Aorta (tissue), 5 donors: ENCODE measurements at regions of chr13 and their contacts with region 1.

Region 1: GRCh38 chr13:111210544-111211469 is 95.7 kb downstream of the ARHGEF7 start:
- DNase-seq: peak; percentile 71 to 80
- ATAC-seq: peak; percentile 76
- H3K4me3 ChIP-seq: no peak overlapping the region
- H3K27ac ChIP-seq: peak overlapping the region in 1 of 2 donors; percentile 67
- H3K4me1 ChIP-seq: peaks cover 2 to 4% of the 10 kb centered on the region in 2 donors
- H3K27me3 ChIP-seq: no peaks in the 10 kb centered on the region

Region 2: GRCh38 chr13:110593430-110594130 is 617.2 kb before region 1 on chr13:
- intact Hi-C with region 1: no loop called
- DNase-seq: no peak
- ATAC-seq: peak; percentile 86
- H3K4me3 ChIP-seq: no peak overlapping the region
- H3K27ac ChIP-seq: no peak overlapping the region
- H3K4me1 ChIP-seq: no peaks in the 10 kb centered on the region
- H3K27me3 ChIP-seq: no peaks in the 10 kb centered on the region

Region 3: GRCh38 chr13:110980921-110981320 is 229.9 kb before region 1 on chr13:
- intact Hi-C with region 1: no loop called
- DNase-seq: no peak
- ATAC-seq: no peak
- H3K4me3 ChIP-seq: no peak overlapping the region
- H3K27ac ChIP-seq: no peak overlapping the region
- H3K4me1 ChIP-seq: no peaks in the 10 kb centered on the region
- H3K27me3 ChIP-seq: no peaks in the 10 kb centered on the region

Region 4: DNA sequence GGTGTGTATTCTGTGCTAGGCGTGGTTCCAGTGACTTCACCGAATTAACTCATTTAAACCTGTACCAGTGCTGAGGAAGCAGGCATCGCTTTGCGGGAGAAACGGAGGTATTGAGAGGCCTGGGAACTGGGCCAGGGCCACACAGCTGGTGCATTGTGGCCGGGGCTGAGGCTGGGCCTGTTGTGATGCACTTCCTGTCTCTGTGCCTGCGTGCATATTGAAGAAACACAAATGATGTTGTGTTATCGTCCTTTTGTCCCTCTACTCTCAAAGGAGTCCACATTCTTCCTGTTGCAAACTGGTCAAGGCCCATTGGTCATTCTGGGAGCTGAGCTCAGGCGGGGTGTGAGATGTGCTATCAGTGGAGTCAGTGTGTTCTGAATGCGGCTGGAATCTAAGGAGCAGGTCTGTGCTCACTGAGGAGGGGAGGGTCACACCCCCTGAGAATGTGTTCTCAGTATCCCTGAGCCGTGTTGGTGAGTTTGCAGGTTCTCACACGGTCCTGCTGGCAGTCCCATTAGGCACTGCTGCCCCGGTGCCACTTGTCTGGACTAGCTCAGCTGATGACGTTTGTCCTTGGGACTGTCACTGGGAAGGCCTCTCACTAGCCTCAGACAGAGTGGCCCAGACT is 33.6 kb before region 1 on chr13:
- intact Hi-C with region 1: loop called in 1 of 2 experiments (anchors 5 kb)
- DNase-seq: peak in 1 of 2 donors; percentile 75
- ATAC-seq: peak; percentile 65
- H3K4me3 ChIP-seq: no peak overlapping the region
- H3K27ac ChIP-seq: peak overlapping the region; percentile 99 to 100
- H3K4me1 ChIP-seq: peaks cover 9 to 13% of the 10 kb centered on the region in 2 donors
- H3K27me3 ChIP-seq: no peaks in the 10 kb centered on the region

Region 5: GRCh38 chr13:111184458-111185401 is 26.1 kb before region 1 on chr13:
- intact Hi-C with region 1: loop called (anchors 2 to 5 kb)
- DNase-seq: peak in 1 of 2 donors; percentile 63
- ATAC-seq: peak; percentile 77
- H3K4me3 ChIP-seq: no peak overlapping the region
- H3K27ac ChIP-seq: peak overlapping the region; percentile 87 to 88
- H3K4me1 ChIP-seq: peaks cover 3 to 5% of the 10 kb centered on the region in 2 donors
- H3K27me3 ChIP-seq: no peaks in the 10 kb centered on the region

Region 6: DNA sequence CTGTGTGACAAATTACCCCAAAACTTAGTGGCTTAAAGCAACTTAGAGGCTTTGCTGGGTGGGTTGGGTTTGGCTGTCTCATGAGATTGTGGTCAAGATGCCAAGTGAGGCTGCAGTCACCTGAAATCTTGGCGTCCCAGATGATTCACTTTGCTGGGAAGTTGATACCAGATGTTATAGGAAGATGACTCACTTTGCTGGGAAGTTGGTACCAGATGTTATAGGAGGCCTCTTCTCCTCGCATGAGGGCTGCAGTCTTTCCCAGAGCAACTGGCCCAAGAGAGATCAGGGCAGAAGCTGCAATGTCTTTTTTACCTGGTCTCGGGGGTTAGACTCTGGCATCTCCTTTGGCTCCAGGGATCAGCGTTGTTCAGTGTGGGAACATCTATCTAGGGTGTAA is 126.4 kb after region 1 on chr13:
- intact Hi-C with region 1: no loop called
- DNase-seq: no peak
- ATAC-seq: no peak
- H3K4me3 ChIP-seq: no peak overlapping the region
- H3K27ac ChIP-seq: no peak overlapping the region
- H3K4me1 ChIP-seq: no peaks in the 10 kb centered on the region
- H3K27me3 ChIP-seq: no peaks in the 10 kb centered on the region

Region 7: DNA sequence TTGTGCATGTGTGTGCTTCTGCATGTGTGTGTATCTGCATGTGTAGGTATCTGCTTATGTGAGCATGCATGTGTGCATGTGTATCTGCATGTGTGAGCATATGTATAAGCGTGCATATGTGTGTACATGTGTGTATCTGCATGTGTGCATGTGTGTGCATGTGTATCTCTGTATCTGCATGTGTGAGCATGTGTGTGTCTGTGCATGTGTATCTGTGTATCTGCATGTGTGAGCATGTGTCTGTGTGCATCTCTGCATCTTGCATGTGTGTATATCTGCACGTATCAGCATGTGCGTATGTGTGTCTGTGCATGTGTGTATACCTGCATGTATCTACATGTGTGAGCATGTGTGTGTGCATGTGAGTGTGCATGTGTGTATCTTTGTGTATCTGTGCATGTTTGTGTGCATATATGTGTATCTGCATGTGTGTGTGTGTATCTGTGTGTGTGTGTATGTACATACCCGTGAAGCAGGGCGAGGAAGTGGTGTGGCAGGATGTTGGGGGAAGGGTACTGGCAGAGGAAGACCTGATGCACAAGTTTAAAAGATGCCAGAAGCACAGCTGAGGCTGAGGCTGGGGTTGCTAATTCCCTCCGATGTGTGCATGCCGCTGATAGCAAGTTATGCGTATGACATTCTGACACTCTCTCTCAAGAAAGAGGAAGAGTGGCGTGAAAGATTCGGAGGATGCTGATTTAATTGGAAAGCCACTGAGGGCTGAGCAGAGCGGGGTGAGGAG is 173.8 kb after region 1 on chr13:
- intact Hi-C with region 1: no loop called
- DNase-seq: no peak
- ATAC-seq: no peak
- H3K4me3 ChIP-seq: no peak overlapping the region
- H3K27ac ChIP-seq: no peak overlapping the region
- H3K4me1 ChIP-seq: no peaks in the 10 kb centered on the region
- H3K27me3 ChIP-seq: no peaks in the 10 kb centered on the region